Adrenal gland (tissue), 19 donors: ENCODE measurements at regions of chr21 and their contacts with region 1.

Region 1: GRCh38 chr21:36927719-36928117 is 38.8 kb downstream of the HLCS start:
- DNase-seq: peak; percentile 80 to 95 (median 88)
- H3K4me3 ChIP-seq: no peak overlapping the region
- H3K27ac ChIP-seq: no peak overlapping the region
- H3K4me1 ChIP-seq: peaks cover 0 to 7% of the 10 kb centered on the region in 2 donors
- H3K27me3 ChIP-seq: no peaks in the 10 kb centered on the region
- CTCF ChIP-seq: peak; percentile 73 to 98 (median 86)
- POLR2A ChIP-seq: no peak

Region 2: GRCh38 chr21:36419996-36420395 is 507.7 kb before region 1 on chr21:
- intact Hi-C with region 1: loop called in 1 of 2 experiments (anchors 10 kb)
- DNase-seq: peak; percentile 75 to 92 (median 89)
- H3K4me3 ChIP-seq: no peak overlapping the region
- H3K27ac ChIP-seq: no peak overlapping the region
- H3K4me1 ChIP-seq: no peaks in the 10 kb centered on the region
- H3K27me3 ChIP-seq: no peaks in the 10 kb centered on the region
- CTCF ChIP-seq: peak; percentile 68 to 87 (median 80)
- POLR2A ChIP-seq: no peak

Region 3: GRCh38 chr21:36504067-36505058 is 423.4 kb before region 1 on chr21:
- intact Hi-C with region 1: loop called (anchors 10 kb)
- DNase-seq: peak in 5 of 7 donors; percentile 25 to 57 (median 55)
- H3K4me3 ChIP-seq: no peak overlapping the region
- H3K27ac ChIP-seq: no peak overlapping the region
- H3K4me1 ChIP-seq: no peaks in the 10 kb centered on the region
- H3K27me3 ChIP-seq: peaks cover 6% of the 10 kb centered on the region
- CTCF ChIP-seq: peak; percentile 82 to 98 (median 84)
- POLR2A ChIP-seq: no peak

Region 4: GRCh38 chr21:36630485-36631206 is 297.1 kb before region 1 on chr21:
- intact Hi-C with region 1: loop called in 1 of 2 experiments (anchors 5 kb)
- DNase-seq: peak; percentile 37 to 76 (median 61)
- H3K4me3 ChIP-seq: no peak overlapping the region
- H3K27ac ChIP-seq: no peak overlapping the region
- H3K4me1 ChIP-seq: no peaks in the 10 kb centered on the region
- H3K27me3 ChIP-seq: peaks cover 12% of the 10 kb centered on the region
- CTCF ChIP-seq: peak; percentile 48 to 68 (median 63)
- POLR2A ChIP-seq: no peak

Region 5: DNA sequence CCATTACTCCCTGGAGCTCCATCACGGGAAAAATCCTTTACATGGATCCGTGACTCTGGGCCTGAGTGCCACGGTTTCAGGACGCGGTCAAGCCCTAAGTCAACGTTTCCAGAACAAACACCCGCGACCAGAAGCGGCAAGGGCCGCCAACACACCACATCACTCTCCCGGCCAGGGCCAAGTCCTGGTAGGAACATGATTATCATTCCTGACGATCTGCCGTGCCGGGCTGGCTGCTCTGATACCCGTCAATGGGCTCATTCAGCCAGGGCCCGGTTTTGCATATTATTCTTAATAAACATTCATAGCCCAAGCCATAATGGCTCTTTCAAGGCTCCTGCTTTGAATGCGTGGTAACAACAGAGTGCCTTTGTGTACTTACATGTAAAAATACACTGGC is 273.4 kb before region 1 on chr21:
- intact Hi-C with region 1: loop called in 1 of 2 experiments (anchors 10 kb)
- DNase-seq: no peak
- H3K4me3 ChIP-seq: no peak overlapping the region
- H3K27ac ChIP-seq: no peak overlapping the region
- H3K4me1 ChIP-seq: no peaks in the 10 kb centered on the region
- H3K27me3 ChIP-seq: peaks cover 13% of the 10 kb centered on the region
- CTCF ChIP-seq: no peak
- POLR2A ChIP-seq: no peak

Region 6: DNA sequence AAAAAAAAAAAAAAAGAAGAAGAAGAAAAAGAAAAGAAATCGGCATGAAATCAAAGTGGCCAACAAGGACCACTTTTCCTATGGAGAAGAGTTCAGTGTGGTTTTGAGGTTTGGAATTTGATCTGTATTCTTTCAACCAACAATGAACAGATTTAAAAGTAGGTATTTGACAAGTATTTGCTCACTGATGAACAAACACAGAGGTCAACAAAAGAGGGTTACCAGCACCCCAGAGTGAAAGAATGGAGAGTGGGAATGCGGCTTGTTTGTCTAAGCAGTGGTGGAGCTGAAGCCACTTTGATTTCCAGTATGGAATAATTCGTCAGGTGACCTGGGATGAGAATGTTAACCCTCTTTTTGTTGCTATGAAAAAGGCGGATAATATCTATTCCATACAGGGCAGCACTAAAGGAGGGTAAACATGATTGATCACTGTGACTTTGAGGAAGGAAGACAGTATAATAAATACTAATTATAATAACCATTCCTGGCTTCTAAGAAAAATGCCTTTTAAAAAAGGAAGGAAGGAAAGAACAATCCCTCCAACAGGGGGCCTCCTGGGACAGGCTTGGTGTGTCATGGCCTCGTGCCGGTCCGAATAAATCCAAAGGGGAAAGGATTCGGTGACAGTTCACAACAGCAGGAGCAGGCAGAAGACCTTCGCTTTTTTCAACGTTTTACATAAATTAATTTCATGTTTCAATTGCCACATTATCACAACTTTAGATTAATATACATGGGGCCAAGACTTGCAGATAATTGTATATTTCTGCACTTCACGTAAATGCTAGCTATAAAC is 266.0 kb before region 1 on chr21:
- intact Hi-C with region 1: loop called (anchors 5 to 10 kb)
- DNase-seq: peak; percentile 34 to 72 (median 56)
- H3K4me3 ChIP-seq: no peak overlapping the region
- H3K27ac ChIP-seq: no peak overlapping the region
- H3K4me1 ChIP-seq: no peaks in the 10 kb centered on the region
- H3K27me3 ChIP-seq: peaks cover 29% of the 10 kb centered on the region
- CTCF ChIP-seq: peak; percentile 20 to 54 (median 44)
- POLR2A ChIP-seq: no peak

Region 7: DNA sequence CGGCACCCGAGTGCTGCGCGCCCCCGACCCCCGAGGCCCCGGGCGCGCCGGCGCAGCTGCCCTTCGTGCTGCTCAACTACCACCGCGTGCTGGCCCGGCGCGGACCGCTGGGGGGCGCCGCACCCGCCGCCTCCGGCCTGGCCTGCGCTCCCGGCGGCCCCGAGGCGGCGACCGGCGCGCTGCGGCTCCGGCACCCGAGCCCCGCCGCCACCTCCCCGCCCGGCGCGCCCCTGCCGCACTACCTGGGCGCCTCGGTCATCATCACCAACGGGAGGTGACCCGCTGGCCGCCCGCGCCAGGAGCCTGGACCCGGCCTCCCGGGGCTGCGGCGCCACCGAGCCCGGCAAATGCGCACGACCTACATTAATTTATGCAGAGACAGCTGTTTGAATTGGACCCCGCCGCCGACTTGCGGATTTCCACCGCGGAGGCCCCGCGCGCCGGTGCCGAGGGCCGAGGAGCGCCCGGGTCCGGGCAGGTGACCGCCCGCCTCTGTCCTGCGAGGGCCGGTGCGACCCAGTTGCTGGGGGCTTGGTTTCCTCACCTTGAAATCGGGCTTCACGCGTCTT is 179.8 kb before region 1 on chr21:
- intact Hi-C with region 1: loop called in 1 of 2 experiments (anchors 10 kb)
- DNase-seq: peak; percentile 29 to 69 (median 49)
- H3K4me3 ChIP-seq: peak overlapping the region in 2 of 4 donors; percentile 32 to 68
- H3K27ac ChIP-seq: no peak overlapping the region
- H3K4me1 ChIP-seq: peaks cover 0 to 3% of the 10 kb centered on the region in 2 donors
- H3K27me3 ChIP-seq: peaks cover 5% of the 10 kb centered on the region
- CTCF ChIP-seq: peak in 1 of 6 experiments; percentile 59
- POLR2A ChIP-seq: no peak